PC-3 (cell line): ENCODE measurements at regions of chr19 and their contacts with region 1.

Region 1: DNA sequence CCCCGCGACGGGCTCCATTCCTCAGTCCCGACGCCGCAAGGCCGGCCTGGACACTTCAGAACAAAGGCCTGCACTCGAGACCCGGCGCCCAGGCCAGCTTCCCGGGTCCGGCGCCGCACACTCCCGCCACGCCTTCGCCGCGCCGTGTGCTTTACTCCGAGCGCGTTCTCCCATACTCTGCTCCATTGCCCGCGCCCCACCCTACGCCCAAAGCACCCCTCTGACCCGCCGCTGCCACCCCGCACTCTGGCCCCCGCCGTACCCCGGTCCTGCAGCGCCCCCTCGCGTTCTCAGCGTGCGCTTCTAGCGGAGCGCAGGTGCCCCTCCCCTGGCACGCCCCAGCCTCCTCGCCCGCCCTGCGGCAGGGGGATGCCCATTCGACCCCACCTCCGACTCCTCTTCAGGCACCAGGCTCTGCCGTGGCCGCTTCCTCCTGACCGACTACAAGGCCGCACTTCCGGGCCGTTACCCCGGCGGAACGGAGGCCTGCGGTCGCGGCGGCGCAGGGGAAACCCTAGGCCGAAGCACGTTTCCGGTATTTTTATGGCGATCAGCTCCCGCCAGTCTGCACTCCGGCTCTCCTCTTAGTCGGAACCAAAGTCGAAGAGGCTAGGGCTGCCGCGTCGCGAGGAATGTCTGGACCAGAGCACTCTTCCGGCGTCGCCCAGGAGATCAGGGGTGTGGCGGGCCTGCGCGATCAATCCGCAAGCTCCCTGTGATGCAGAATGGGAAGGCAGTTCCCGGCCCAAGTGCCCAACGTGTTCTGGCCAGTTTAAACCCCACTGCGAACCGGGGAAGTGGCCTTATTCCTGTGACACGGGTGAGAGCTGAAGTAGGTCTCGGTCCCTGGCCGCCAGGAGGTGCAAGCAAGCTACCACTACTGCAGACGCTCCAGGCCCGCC is at the start of gene ZBTB45:
- DNase-seq: peak; percentile 98
- ATAC-seq: peak; percentile 79
- H3K4me3 ChIP-seq: peak within 1 kb of the TSS; percentile 89
- H3K27ac ChIP-seq: peak within 1 kb of the TSS; percentile 65
- H3K4me1 ChIP-seq: peaks cover 13% of the 10 kb centered on the region
- H3K27me3 ChIP-seq: no peaks in the 10 kb centered on the region
- CTCF ChIP-seq: peak; percentile 79
- total RNA-seq, gene ZBTB45: 14.0 and 19.1 TPM in 2 replicates

Region 2: DNA sequence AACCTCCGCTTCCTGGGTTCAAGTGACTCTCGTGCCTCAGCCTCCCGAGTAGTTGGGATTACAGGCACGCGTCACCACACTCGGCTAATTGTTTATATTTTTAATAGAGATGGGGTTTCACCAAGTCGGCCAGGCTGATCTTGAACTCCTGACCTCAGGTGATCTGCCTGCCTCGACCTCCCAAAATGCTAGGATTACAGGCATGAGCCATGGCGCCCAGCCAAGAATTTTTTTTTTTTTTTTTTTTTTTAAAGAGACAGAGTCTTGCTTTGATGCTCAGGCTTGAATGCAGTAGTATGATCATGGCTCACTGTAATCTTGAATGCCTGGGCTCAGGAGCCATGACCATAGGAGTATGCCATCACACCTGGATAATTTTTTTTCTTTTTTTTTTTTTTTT is 375.1 kb before region 1 on chr19:
- CTCF ChIA-PET with region 1: no interaction called
- POLR2A ChIA-PET with region 1: no interaction called
- intact Hi-C with region 1: no loop called
- DNase-seq: no peak
- ATAC-seq: no peak
- H3K4me3 ChIP-seq: no peak overlapping the region
- H3K27ac ChIP-seq: no peak overlapping the region
- H3K4me1 ChIP-seq: no peaks in the 10 kb centered on the region
- H3K27me3 ChIP-seq: no peaks in the 10 kb centered on the region
- CTCF ChIP-seq: no peak

Region 3: GRCh38 chr19:58475714-58476497 is 43.7 kb before region 1 on chr19 and contains the start of gene ZNF446:
- CTCF ChIA-PET with region 1: no interaction called
- POLR2A ChIA-PET with region 1: no interaction called
- intact Hi-C with region 1: no loop called
- DNase-seq: peak; percentile 98
- ATAC-seq: peak; percentile 82
- H3K4me3 ChIP-seq: peak within 1 kb of the TSS; percentile 72
- H3K27ac ChIP-seq: peak within 1 kb of the TSS; percentile 48
- H3K4me1 ChIP-seq: peaks cover 20% of the 10 kb centered on the region
- H3K27me3 ChIP-seq: no peaks in the 10 kb centered on the region
- CTCF ChIP-seq: no peak
- total RNA-seq, gene ZNF446: 8.9 and 13.4 TPM in 2 replicates

Region 4: GRCh38 chr19:58499021-58499927 is 20.3 kb before region 1 on chr19:
- CTCF ChIA-PET with region 1: interaction called, 4 read pairs
- POLR2A ChIA-PET with region 1: no interaction called
- intact Hi-C with region 1: loop called (anchors 1 kb)
- DNase-seq: peak; percentile 100
- ATAC-seq: peak; percentile 98
- H3K4me3 ChIP-seq: peak overlapping the region; percentile 69
- H3K27ac ChIP-seq: peak overlapping the region; percentile 29
- H3K4me1 ChIP-seq: peaks cover 21% of the 10 kb centered on the region
- H3K27me3 ChIP-seq: no peaks in the 10 kb centered on the region
- CTCF ChIP-seq: 0 out of 2 replicates have a peak, but pooled peaks have one; percentile 28

Region 5: GRCh38 chr19:58543826-58544590 is 24.4 kb after region 1 on chr19 and contains the start of gene TRIM28:
- CTCF ChIA-PET with region 1: interaction called, 5 read pairs
- POLR2A ChIA-PET with region 1: interaction called, 11 read pairs
- intact Hi-C with region 1: no loop called
- DNase-seq: peak; percentile 99
- ATAC-seq: peak; percentile 96
- H3K4me3 ChIP-seq: peak within 1 kb of the TSS; percentile 92
- H3K27ac ChIP-seq: peak within 1 kb of the TSS; percentile 88
- H3K4me1 ChIP-seq: peaks cover 13% of the 10 kb centered on the region
- H3K27me3 ChIP-seq: no peaks in the 10 kb centered on the region
- CTCF ChIP-seq: no peak
- total RNA-seq, gene TRIM28: 1,169 and 1,653 TPM in 2 replicates

Region 6: DNA sequence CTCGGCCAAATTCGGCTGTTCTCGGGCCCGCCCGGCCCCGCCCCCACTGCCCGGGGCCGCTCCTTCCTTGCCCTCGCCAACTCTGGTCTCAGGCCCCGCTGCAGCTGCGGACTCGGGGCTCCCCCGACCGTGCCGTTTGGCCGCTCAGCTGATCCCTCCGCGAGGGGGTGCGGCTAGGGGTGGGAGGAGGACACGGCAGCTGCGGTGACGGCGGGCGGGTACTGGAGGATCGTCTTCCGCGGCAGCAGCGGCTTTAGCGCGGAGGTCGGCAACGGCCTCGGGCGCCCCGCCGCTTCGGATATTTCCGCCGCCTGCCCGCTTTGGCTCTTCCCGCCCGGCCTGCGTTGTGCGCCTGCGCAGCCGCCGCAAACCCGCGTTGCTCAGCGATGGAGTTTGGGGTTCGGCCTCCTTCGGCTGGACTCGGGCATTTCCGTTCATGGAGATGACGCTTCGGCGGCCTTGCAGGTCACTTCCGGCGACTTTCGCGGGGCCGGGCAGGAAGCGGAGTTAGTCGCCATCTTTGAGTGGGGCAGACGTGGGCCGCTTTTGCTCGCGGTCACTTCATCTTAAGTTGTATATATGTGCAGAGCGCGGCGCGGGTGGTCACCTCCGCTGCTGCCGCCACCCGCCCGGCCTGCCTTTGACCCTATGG is 39.1 kb after region 1 on chr19:
- CTCF ChIA-PET with region 1: interaction called, 3 read pairs
- POLR2A ChIA-PET with region 1: interaction called, 11 read pairs
- intact Hi-C with region 1: no loop called
- DNase-seq: peak; percentile 100
- ATAC-seq: peak; percentile 52
- H3K4me3 ChIP-seq: peak overlapping the region; percentile 69
- H3K27ac ChIP-seq: peak overlapping the region; percentile 85
- H3K4me1 ChIP-seq: peaks cover 57% of the 10 kb centered on the region
- H3K27me3 ChIP-seq: no peaks in the 10 kb centered on the region
- CTCF ChIP-seq: no peak

Region 7: DNA sequence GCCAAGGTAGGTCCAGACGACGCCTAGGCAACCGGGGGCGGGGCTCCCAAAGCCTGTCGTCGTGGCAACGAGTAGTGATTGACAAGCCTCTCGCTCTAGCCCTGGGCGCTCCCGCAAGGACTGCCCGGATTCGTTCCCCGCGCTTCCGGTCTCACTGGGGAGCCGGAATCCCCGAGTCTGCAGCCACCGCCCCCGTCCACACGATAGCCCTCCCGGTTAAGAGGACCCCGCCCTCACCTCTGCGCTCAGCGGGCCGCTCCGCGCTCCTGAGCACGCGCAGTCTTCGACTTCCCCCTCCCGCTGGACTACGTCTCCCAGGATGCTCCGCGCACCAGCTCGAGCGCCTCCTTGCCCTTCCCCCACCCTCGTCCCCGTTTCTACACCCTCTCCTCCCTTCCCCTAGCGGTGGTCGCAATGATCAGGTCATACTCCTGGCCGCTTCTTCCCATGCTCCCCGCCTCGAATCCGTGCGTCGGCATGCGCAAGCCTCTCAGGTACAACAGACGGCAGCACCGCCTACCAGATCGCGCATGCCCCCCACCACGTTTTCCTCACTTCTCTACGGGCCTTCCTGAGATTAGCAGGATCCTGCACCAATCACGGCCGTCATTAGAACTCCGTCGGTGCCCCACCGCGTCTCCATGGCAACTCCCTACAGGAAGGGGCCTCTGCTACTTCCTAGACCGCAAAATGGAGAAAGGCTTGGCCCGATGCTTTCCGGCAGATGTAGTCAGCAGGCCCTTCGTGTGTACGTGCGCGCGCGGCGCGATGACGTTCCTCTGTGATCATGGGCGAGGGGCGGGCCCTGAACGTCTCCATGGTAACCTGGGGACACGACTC is 53.4 kb after region 1 on chr19 and contains the start of gene MZF1:
- CTCF ChIA-PET with region 1: interaction called, 3 read pairs
- POLR2A ChIA-PET with region 1: no interaction called
- intact Hi-C with region 1: loop called (anchors 2 kb)
- DNase-seq: peak; percentile 100
- ATAC-seq: peak; percentile 69
- H3K4me3 ChIP-seq: peak within 1 kb of the TSS; percentile 76
- H3K27ac ChIP-seq: peak within 1 kb of the TSS; percentile 91
- H3K4me1 ChIP-seq: peaks cover 23% of the 10 kb centered on the region
- H3K27me3 ChIP-seq: no peaks in the 10 kb centered on the region
- CTCF ChIP-seq: no peak
- total RNA-seq, gene MZF1: 18.0 and 29.3 TPM in 2 replicates